A549 (cell line): ENCODE measurements at regions of chr17 and their contacts with region 1.

Region 1: DNA sequence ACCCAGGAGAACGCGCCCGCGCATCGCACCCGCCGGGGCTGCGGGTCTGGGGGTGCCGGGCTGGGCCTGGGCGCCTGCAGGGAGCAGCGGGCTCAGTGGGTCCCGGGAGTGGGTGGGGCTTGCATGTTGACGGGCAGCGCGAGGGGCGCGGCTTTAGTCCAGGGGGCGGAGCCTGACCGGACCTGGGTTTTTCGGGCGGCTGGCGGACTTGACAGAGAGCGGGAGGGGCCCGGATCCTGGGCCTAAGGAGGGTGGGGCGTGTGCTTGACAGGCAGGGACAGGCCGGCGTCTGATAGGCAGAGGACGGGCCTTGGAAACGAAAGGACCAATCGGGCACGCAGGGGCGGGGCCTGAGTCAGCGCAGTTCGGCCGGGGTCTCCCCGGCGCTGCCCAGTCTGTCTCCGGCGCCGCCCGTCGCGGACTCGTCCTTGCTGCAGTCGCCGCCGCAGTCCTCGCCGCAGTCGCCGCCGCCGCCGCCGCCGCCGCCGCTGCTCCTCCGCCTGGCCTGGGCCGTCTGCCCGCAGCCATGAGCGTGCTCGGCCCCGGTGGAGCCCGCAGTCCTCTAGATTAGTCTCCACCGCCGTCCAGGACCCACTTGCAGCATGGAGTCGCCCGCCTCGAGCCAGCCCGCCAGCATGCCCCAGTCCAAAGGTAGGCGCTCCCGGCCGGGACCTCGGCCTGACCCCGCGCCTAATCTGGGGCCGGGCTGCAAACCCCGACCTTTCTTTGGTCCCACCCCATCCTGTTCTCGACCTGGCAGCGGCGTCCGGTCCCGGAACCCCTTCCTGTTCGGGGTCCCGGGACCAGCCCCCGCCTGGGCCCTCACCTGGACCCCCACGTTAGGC is at the start of gene MAP2K3:
- DNase-seq: peak; percentile 98 to 100
- ATAC-seq: peak; percentile 46 to 75
- H3K4me3 ChIP-seq: peak within 1 kb of the TSS; percentile 78
- H3K27ac ChIP-seq: peak within 1 kb of the TSS; percentile 76 to 89
- H3K4me1 ChIP-seq: peaks cover 52% of the 10 kb centered on the region
- CTCF ChIP-seq: no peak
- EP300 ChIP-seq: no peak
- POLR2A ChIP-seq: peak; percentile 94
- RAD21 ChIP-seq: no peak
- polyA plus RNA-seq, gene MAP2K3: 13.9 and 25.0 TPM in 2 replicates

Region 2: DNA sequence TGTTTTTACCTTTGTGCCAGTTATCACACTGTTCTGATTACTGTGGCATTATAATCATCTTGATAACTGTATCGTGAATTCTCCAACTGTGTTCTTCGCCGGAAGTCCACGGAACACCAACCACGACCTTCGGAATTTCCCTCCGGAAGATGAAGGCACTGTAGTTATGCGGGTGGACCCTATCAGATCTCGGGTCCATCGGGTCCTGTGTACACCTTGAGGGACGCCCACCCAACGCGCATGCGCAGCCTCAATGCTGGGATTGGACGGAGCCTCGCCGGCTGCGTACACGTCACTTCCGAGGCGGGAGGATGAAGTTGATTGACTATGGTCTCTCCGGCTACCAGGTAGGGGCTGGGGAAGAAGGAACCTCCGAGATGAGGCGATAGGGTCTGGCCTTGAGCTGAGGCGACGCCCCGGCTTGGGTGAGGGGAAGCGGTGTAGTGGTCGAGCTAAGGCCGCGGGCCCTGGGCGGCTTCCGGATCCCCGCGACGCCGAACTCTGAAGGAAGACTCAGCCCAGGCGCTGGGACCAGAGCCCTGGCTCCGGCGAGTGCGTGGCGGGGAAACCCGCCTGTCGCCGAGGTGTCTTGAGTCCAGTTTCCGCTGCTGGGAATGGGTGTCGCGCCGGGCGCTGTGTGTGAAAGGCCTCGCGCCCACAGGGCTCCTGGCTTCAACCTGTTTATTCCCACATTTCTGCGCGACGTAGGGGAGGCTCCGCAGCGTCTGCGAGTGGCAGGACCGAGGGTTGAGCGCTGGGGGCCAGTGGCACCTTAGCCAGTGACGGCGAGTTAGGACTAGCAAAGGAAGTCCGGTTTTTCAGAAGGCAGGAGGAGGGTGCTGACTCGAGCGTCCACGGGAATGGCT is 157.7 kb before region 1 on chr17 and contains the start of gene DHRS7B:
- CTCF ChIA-PET with region 1: interaction called, 16 read pairs
- POLR2A ChIA-PET with region 1: no interaction called
- DNase-seq: peak; percentile 97 to 99
- ATAC-seq: peak; percentile 97 to 98
- H3K4me3 ChIP-seq: peak within 1 kb of the TSS; percentile 83
- H3K27ac ChIP-seq: peak within 1 kb of the TSS; percentile 79 to 90
- H3K4me1 ChIP-seq: peaks cover 13% of the 10 kb centered on the region; the same call in 2 of the 3 replicates
- CTCF ChIP-seq: no peak
- EP300 ChIP-seq: no peak
- POLR2A ChIP-seq: peak; percentile 89
- RAD21 ChIP-seq: no peak
- polyA plus RNA-seq, gene DHRS7B: 25.4 and 31.7 TPM in 2 replicates

Region 3: DNA sequence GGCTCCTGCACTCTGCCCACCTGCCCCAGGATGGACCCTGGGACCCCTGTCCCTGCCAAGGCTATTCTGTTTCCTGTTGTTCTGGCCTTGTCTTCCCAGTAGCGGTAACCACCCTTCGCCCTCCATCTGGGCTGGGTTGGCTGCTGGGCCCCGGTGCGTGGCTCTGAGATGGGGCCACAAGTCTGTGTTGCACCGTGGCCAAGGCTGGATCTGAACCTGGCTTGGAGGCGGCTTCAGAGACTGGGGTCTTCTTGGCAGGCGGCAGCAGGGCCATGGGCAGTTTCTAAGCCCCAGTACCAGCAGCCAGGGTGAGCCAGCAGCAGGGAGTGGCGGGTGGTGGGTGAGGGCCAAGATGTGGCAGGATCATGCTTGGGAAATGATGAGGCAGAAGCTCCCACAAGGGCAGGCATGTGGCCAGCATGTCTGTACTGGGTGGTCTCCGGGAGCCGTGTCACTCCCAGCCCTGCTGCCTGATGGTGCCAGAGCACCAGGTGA is 12.5 kb after region 1 on chr17:
- CTCF ChIA-PET with region 1: interaction called, 14 read pairs
- POLR2A ChIA-PET with region 1: interaction called, 3 read pairs
- DNase-seq: no peak
- ATAC-seq: no peak
- H3K4me3 ChIP-seq: no peak overlapping the region
- H3K27ac ChIP-seq: no peak overlapping the region
- H3K4me1 ChIP-seq: no peaks in the 10 kb centered on the region
- CTCF ChIP-seq: no peak
- EP300 ChIP-seq: no peak
- POLR2A ChIP-seq: no peak
- RAD21 ChIP-seq: no peak

Region 4: DNA sequence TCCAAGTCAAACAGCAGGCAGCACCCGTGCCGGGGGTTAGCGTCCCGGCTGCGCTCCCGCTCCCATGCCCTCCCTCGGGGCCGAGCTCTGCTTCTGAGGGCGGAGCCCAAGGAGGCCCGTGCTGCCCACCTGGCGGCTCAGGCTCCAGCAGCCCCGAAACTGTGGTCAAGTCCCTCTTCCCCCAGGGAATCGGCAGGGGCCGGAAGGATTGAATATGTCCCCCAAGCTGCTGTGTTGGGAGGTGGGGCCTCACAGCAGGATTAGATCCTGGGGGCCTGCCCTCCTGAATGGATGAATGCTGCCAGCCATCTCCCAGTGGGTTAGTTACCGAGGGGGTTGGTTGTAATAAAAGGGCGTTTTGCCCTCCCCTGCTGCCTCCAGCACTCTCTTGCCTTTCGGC is 33.9 kb after region 1 on chr17:
- CTCF ChIA-PET with region 1: interaction called, 18 read pairs
- POLR2A ChIA-PET with region 1: no interaction called
- DNase-seq: no peak
- ATAC-seq: no peak
- H3K4me3 ChIP-seq: no peak overlapping the region
- H3K27ac ChIP-seq: no peak overlapping the region
- H3K4me1 ChIP-seq: peaks cover 19% of the 10 kb centered on the region
- CTCF ChIP-seq: no peak
- EP300 ChIP-seq: no peak
- POLR2A ChIP-seq: no peak
- RAD21 ChIP-seq: no peak

Region 5: GRCh38 chr17:21451975-21452374 is 167.4 kb after region 1 on chr17:
- CTCF ChIA-PET with region 1: interaction called, 40 read pairs
- POLR2A ChIA-PET with region 1: interaction called, 3 read pairs
- DNase-seq: no peak
- ATAC-seq: no peak
- H3K4me3 ChIP-seq: no peak overlapping the region
- H3K27ac ChIP-seq: no peak overlapping the region
- H3K4me1 ChIP-seq: peaks cover 3% of the 10 kb centered on the region; the same call in 1 of the 3 replicates
- CTCF ChIP-seq: no peak
- EP300 ChIP-seq: no peak
- POLR2A ChIP-seq: no peak
- RAD21 ChIP-seq: no peak

Region 6: GRCh38 chr17:21524211-21524591 is 239.7 kb after region 1 on chr17:
- CTCF ChIA-PET with region 1: interaction called, 11 read pairs
- POLR2A ChIA-PET with region 1: no interaction called
- DNase-seq: no peak
- ATAC-seq: no peak
- H3K4me3 ChIP-seq: no peak overlapping the region
- H3K27ac ChIP-seq: no peak overlapping the region
- H3K4me1 ChIP-seq: no peaks in the 10 kb centered on the region
- CTCF ChIP-seq: no peak
- EP300 ChIP-seq: no peak
- POLR2A ChIP-seq: no peak
- RAD21 ChIP-seq: no peak